ENCODE measurements at regions of chr17 and their contacts with region 1.

Region 1: DNA sequence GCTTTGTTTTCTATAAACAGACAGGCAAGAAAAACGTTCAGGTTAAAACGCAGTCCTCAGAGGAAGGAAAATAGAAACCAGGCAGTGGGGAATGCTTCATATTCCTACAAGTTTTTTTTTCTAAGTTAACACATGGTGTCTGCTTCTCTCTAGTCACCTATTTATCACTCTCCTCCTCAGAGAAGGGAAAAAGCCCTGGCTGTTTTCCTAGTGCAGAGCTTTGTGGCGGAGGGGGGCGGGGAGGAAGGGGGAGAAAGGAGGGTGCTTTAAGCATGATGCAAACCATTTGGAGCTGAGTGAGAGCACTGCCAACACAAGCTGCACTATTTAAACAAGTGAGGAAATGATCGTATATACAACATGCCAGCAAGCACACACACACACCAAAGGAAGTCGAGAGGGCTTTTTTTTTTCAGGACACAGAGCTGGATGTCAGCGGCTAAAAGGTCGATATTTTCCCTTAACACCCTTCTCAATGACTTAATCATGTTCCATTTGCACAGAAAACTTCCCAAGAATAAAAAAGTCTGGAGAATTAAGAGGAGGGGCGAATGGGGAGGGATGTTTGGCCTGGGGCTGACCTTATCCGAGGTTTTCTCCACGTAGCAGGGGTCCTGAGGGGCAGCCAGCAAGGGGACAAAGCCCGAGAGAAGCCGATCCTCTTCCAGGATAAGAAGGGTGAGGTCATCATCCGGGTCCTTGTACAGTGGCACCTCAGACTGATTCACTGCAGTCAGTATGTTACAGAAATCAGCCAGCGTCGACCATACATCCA is 117.4 kb downstream of the HIC1 start:
- DNase-seq: peak; percentile 79
- ATAC-seq: peak; percentile 79 to 83

Region 2: GRCh38 chr17:2094891-2095535 is 77.3 kb before region 1 on chr17:
- intact Hi-C with region 1: no loop called
- DNase-seq: peak; percentile 71
- ATAC-seq: peak; percentile 83 to 88

Region 3: GRCh38 chr17:2107506-2107905 is 64.8 kb before region 1 on chr17:
- intact Hi-C with region 1: loop called in 1 of 2 experiments (anchors 5 kb)
- DNase-seq: no peak
- ATAC-seq: peak; percentile 68 to 74

Measured in left cardiac atrium (tissue), 4 donors.